Activated CD4-positive, alpha-beta T cell treated with anti-CD3 and anti-CD28 coated beads, Interleukin-2, amount 10 ng/mL, durations not matched to agents 7 days and 5 days (primary cell): ENCODE measurements at regions of chr7 and their contacts with region 1.

Region 1: DNA sequence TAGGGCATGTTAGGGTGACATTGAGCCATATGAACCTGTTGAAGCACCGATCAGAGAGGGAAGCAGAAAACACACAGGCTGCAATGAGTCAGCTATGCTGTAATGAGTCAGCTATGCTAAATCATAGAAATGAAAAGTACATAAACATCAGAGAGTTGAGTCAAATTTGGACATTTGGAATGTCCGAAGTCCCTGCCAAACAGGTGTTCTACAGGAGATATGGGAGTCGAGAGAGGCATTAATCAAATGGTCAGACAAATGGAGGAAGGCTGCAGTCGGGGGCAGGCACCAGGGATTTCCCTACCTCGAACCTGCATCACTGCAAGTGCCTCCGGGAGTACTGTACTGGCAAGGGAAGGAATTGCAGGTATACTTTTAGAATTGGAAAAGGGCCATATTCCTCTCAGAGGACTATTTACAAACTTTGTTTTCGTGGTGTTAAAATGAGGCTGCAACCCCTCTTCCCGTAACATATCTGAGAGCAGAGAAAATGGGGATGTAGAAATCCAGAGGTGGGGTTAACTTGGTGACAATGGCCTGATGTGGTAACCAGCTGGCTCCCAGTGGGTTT is 8.8 kb upstream of the ZC3HAV1 start:
- DNase-seq: no peak
- H3K4me3 Mint-ChIP-seq: peak overlapping the region; percentile 1
- H3K27ac Mint-ChIP-seq: peak overlapping the region; percentile 80
- H3K4me1 Mint-ChIP-seq: peaks cover 36% of the 10 kb centered on the region
- H3K27me3 Mint-ChIP-seq: no peaks in the 10 kb centered on the region

Region 2: GRCh38 chr7:139044813-139045794 is 73.2 kb before region 1 on chr7:
- CTCF ChIA-PET with region 1: no interaction called
- POLR2A ChIA-PET with region 1: no interaction called
- DNase-seq: peak; percentile 50
- H3K4me3 Mint-ChIP-seq: peak overlapping the region; percentile 28
- H3K27ac Mint-ChIP-seq: peak overlapping the region; percentile 81
- H3K4me1 Mint-ChIP-seq: peaks cover 85% of the 10 kb centered on the region
- H3K27me3 Mint-ChIP-seq: no peaks in the 10 kb centered on the region

Region 3: DNA sequence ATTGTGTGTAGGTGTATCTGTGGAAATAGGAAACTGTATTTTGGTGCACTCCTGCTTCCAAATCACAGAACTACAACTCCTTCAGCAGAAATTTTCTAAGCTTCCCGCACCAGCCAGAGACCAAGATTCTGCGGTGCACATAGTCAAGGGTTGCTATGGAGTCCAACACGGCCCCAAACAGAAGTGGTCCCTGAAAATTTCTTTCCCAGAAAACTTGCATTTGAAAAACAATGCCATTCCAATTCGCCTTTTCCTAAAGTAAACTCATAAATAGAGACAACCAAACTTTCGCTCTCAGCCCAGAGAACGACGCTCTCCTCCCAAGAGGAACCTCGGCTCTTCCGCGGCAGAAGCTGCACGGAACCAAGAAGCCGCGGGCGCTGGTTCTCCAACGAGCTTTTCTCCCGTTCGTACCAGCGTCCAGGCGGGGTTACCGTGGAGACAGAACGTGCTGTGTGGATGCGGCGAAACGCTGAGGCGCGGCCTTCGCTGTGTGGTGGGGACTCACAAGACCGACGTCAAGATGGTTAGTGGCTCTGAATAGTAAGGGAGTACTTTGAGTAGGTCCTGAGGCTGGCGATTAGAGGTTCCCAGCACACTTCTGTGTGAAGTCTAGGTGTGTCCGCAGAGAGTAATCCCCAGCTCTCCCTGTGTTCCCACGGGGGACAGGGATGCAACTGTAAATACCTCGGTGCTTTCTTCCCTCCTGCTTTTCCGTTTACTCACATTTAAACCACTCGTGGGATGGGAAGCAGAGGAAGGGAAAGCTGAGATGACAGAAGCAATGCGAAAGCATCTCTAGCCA is 15.2 kb after region 1 on chr7:
- CTCF ChIA-PET with region 1: interaction called, 12 read pairs
- POLR2A ChIA-PET with region 1: no interaction called
- DNase-seq: peak; percentile 90
- H3K4me3 Mint-ChIP-seq: peak overlapping the region; percentile 78
- H3K27ac Mint-ChIP-seq: peak overlapping the region; percentile 77
- H3K4me1 Mint-ChIP-seq: peaks cover 34% of the 10 kb centered on the region
- H3K27me3 Mint-ChIP-seq: peaks cover 4% of the 10 kb centered on the region